B cell (primary cell): ENCODE measurements at regions of chr16 and their contacts with region 1.

Region 1: DNA sequence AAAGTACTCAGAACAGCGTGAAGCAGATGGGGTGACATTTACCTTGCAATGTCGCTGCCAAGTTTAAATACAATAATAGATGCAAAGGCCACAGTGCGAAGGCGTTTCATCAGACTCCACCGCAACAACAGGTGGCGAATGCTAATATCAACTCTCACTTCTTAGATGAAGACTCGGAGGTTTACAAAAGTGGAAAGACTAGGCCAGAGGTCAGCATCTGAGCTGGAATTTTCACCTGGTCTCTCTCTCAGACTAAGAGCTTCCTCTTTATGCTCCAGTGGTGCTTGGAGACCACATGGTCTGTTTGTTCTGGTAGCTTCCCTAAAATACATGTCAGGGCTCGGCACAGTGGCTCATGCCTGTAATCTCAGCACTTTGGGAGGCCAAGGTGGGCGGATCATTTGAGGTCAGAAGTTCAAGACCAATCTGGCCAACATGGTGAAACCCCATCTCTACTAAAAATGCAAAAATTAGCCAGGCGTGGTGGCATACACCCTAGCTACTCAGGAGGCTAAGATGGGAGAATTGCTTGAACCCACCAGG is 169.1 kb downstream of the XYLT1 start:
- DNase-seq: peak; percentile 95
- ATAC-seq: peak; percentile 88
- H3K4me3 ChIP-seq: peak overlapping the region in 1 of 5 experiments; percentile 9
- H3K4me3 Mint-ChIP-seq: peak overlapping the region; percentile 48
- H3K27ac ChIP-seq: peak overlapping the region; percentile 83 to 89
- H3K27ac Mint-ChIP-seq: peak overlapping the region; percentile 91
- H3K4me1 ChIP-seq: peaks cover 62 to 77% of the 10 kb centered on the region in 2 donors
- H3K4me1 Mint-ChIP-seq: peaks cover 71% of the 10 kb centered on the region
- H3K27me3 ChIP-seq: no peaks in the 10 kb centered on the region
- H3K27me3 Mint-ChIP-seq: no peaks in the 10 kb centered on the region
- CTCF ChIP-seq: no peak

Region 2: DNA sequence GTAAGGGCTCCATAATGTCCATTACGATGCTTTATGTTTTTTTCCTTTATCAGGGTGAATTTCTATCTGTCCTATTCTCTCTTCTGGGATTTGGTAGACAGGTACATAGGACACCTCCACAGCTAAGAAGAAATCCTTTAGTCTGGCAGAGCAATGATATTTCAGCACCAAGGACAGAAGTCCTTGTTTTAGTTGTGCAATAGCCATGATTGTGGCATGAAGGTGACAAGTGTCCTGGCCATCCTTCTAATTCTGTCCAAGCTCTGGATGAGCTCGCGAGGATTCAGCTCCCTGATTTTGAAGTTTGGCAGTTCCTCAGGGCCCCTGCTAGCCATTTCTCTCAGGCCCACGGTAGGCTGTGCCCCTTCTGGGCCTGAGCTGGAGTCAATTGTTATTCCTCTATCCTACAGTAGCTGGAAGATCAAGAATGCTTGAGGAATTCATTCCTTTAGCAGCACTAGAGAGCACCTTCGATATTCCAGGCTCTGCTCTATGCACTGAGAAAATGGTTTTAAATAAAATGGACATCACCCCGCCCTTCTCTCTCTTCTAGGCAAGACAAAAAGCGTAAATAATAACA is 151.7 kb before region 1 on chr16:
- CTCF ChIA-PET with region 1: no interaction called
- POLR2A ChIA-PET with region 1: no interaction called
- intact Hi-C with region 1: no loop called
- DNase-seq: no peak
- ATAC-seq: no peak
- H3K4me3 ChIP-seq: no peak overlapping the region
- H3K4me3 Mint-ChIP-seq: no peak overlapping the region
- H3K27ac ChIP-seq: no peak overlapping the region
- H3K27ac Mint-ChIP-seq: no peak overlapping the region
- H3K4me1 ChIP-seq: peaks cover 9 to 11% of the 10 kb centered on the region in 2 donors
- H3K4me1 Mint-ChIP-seq: peaks cover 7% of the 10 kb centered on the region
- H3K27me3 ChIP-seq: no peaks in the 10 kb centered on the region
- H3K27me3 Mint-ChIP-seq: no peaks in the 10 kb centered on the region
- CTCF ChIP-seq: no peak

Region 3: GRCh38 chr16:17160285-17160853 is 141.3 kb before region 1 on chr16:
- CTCF ChIA-PET with region 1: no interaction called
- POLR2A ChIA-PET with region 1: no interaction called
- intact Hi-C with region 1: no loop called
- DNase-seq: no peak
- ATAC-seq: no peak
- H3K4me3 ChIP-seq: no peak overlapping the region
- H3K4me3 Mint-ChIP-seq: no peak overlapping the region
- H3K27ac ChIP-seq: no peak overlapping the region
- H3K27ac Mint-ChIP-seq: no peak overlapping the region
- H3K4me1 ChIP-seq: peaks cover 23 to 27% of the 10 kb centered on the region in 2 donors
- H3K4me1 Mint-ChIP-seq: peaks cover 28% of the 10 kb centered on the region
- H3K27me3 ChIP-seq: no peaks in the 10 kb centered on the region
- H3K27me3 Mint-ChIP-seq: no peaks in the 10 kb centered on the region
- CTCF ChIP-seq: no peak

Region 4: DNA sequence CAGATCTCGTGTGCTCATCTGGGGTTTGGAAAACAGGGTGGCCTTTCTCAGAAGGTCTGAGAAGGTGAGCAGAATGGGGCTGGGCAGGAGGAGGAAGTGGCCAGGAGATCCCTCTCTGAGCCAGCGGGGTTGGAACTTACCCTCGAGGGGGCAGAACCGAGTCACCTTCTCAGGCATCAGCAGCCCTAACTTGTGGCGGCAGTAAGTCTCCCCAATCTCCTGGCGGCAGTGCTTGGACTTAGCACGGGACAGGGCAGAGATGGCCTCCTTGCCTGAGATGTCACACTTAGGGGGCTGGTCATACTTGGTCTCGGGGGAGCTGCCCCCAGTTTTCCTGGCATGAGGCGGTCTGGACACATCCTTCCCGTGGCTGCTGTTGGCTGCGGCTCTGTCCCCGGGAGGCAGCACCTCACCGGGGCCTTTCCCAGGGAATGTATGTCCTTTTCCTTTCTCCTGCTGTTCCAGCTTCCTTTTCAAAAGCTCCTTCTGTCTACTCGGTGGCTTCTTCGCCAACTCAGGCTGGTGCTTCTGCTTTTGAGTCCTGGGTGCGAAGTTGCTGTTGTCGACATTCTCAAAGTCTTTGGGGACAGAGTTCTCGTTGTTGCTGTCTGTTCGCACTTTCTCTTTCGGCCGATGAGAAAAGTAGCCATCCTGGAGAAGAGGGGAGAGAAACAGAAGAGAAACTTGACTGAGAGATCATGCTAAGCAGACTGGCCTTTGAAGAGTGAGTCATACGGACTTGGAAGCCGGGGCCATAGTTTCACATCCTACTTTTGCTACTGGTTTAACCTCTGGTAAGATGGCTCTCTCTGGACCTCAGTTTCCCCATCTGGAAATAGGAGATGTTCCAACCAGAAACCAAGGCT is 42.6 kb before region 1 on chr16:
- CTCF ChIA-PET with region 1: interaction called, 8 read pairs
- POLR2A ChIA-PET with region 1: no interaction called
- intact Hi-C with region 1: loop called (anchors 2 kb)
- DNase-seq: peak; percentile 58
- ATAC-seq: peak; percentile 76
- H3K4me3 ChIP-seq: peak overlapping the region in 4 of 5 experiments; percentile 16 to 51 (median 24)
- H3K4me3 Mint-ChIP-seq: peak overlapping the region; percentile 83
- H3K27ac ChIP-seq: peak overlapping the region; percentile 42 to 65
- H3K27ac Mint-ChIP-seq: peak overlapping the region; percentile 88
- H3K4me1 ChIP-seq: peaks cover 19 to 21% of the 10 kb centered on the region in 2 donors
- H3K4me1 Mint-ChIP-seq: peaks cover 40% of the 10 kb centered on the region
- H3K27me3 ChIP-seq: no peaks in the 10 kb centered on the region
- H3K27me3 Mint-ChIP-seq: no peaks in the 10 kb centered on the region
- CTCF ChIP-seq: no peak

Region 5: DNA sequence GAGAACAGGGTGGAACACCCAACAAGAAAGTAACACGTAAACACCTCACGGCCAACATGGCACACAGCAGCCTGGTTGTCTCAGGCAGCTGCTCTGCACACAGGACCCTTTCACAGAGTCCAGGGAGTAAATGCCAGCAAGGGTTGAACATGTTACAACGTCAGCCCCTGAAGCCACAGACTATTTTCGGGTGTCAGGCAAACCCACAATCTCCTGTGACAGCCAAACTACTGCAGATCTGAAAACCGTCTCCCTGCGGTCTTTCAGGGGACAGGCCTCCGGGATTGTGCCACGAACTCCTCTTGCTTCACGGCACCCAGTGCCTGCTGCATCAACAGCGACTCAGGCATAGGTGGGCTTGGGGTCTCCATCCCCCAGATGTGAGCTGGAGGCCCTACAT is 41.4 kb after region 1 on chr16:
- CTCF ChIA-PET with region 1: interaction called, 5 read pairs
- POLR2A ChIA-PET with region 1: interaction called, 11 read pairs
- intact Hi-C with region 1: loop called (anchors 1 kb)
- DNase-seq: peak; percentile 69
- ATAC-seq: peak; percentile 63
- H3K4me3 ChIP-seq: peak overlapping the region in 2 of 5 experiments; percentile 14 to 17
- H3K4me3 Mint-ChIP-seq: peak overlapping the region; percentile 66
- H3K27ac ChIP-seq: peak overlapping the region; percentile 62 to 72
- H3K27ac Mint-ChIP-seq: peak overlapping the region; percentile 87
- H3K4me1 ChIP-seq: peaks cover 73 to 80% of the 10 kb centered on the region in 2 donors
- H3K4me1 Mint-ChIP-seq: peaks cover 68% of the 10 kb centered on the region
- H3K27me3 ChIP-seq: no peaks in the 10 kb centered on the region
- H3K27me3 Mint-ChIP-seq: no peaks in the 10 kb centered on the region
- CTCF ChIP-seq: no peak

Region 6: GRCh38 chr16:17369421-17370222 is 68.0 kb after region 1 on chr16:
- CTCF ChIA-PET with region 1: interaction called, 48 read pairs
- POLR2A ChIA-PET with region 1: interaction called, 26 read pairs
- intact Hi-C with region 1: loop called (anchors 1 kb)
- DNase-seq: peak; percentile 88
- ATAC-seq: peak; percentile 87
- H3K4me3 ChIP-seq: peak overlapping the region; percentile 22 to 56 (median 33)
- H3K4me3 Mint-ChIP-seq: peak overlapping the region; percentile 88
- H3K27ac ChIP-seq: peak overlapping the region; percentile 91 to 93
- H3K27ac Mint-ChIP-seq: peak overlapping the region; percentile 96
- H3K4me1 ChIP-seq: peaks cover 82 to 86% of the 10 kb centered on the region in 2 donors
- H3K4me1 Mint-ChIP-seq: peaks cover 87% of the 10 kb centered on the region
- H3K27me3 ChIP-seq: no peaks in the 10 kb centered on the region
- H3K27me3 Mint-ChIP-seq: no peaks in the 10 kb centered on the region
- CTCF ChIP-seq: no peak

Region 7: DNA sequence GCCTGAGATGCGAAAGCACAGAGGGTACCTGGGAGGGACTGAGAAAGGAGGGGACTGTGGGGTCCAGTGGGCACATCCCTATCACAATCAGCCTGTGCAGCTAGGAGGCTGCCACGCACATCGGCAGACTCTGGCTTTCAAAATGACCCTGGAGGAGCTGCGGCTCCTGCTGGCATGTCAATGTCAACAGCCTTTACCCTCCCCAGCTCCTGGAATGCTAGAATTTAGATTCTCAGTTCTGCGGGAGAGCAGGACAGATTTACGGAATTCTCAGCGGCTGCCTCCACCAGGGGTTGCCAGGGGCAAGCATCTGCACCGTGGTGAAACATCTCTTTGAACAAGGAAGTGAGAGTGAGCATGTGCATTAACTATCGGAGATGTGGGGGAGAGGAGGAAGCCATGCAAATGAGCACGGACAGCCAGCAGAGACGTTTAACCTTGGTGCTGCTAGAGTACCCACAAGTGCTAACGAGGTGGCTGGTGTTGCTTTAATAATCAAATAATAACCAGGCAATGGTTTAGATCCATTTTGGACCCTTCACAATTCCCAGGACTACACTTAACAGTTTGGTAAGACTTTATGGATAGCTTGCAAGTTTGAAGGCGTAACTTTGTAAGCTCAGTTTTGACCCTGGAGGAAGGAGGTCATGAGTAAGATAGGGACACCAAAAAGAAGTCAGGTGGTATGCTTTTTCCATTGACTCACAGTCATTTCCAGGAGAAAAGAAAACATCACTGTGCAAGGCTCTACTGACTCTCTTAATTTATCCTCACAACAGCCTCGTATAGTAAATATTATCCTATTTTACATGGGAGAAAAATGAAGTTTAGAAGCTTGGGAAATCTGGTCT is 115.0 kb after region 1 on chr16:
- CTCF ChIA-PET with region 1: interaction called, 13 read pairs
- POLR2A ChIA-PET with region 1: interaction called, 7 read pairs
- intact Hi-C with region 1: loop called (anchors 1 kb)
- DNase-seq: peak; percentile 90
- ATAC-seq: peak; percentile 91
- H3K4me3 ChIP-seq: peak overlapping the region; percentile 2 to 61 (median 40)
- H3K4me3 Mint-ChIP-seq: peak overlapping the region; percentile 85
- H3K27ac ChIP-seq: peak overlapping the region; percentile 76 to 81
- H3K27ac Mint-ChIP-seq: peak overlapping the region; percentile 90
- H3K4me1 ChIP-seq: peaks cover 61 to 68% of the 10 kb centered on the region in 2 donors
- H3K4me1 Mint-ChIP-seq: peaks cover 69% of the 10 kb centered on the region
- H3K27me3 ChIP-seq: no peaks in the 10 kb centered on the region
- H3K27me3 Mint-ChIP-seq: no peaks in the 10 kb centered on the region
- CTCF ChIP-seq: peak; percentile 68

Region 8: GRCh38 chr16:17467923-17468540 is 166.4 kb after region 1 on chr16:
- CTCF ChIA-PET with region 1: interaction called, 33 read pairs
- POLR2A ChIA-PET with region 1: interaction called, 6 read pairs
- intact Hi-C with region 1: loop called (anchors 2 kb)
- DNase-seq: peak; percentile 58
- ATAC-seq: peak; percentile 28
- H3K4me3 ChIP-seq: peak overlapping the region in 1 of 5 experiments; percentile 17
- H3K4me3 Mint-ChIP-seq: peak overlapping the region; percentile 93
- H3K27ac ChIP-seq: no peak overlapping the region
- H3K27ac Mint-ChIP-seq: no peak overlapping the region
- H3K4me1 ChIP-seq: peaks cover 42 to 46% of the 10 kb centered on the region in 2 donors
- H3K4me1 Mint-ChIP-seq: peaks cover 56% of the 10 kb centered on the region
- H3K27me3 ChIP-seq: no peaks in the 10 kb centered on the region
- H3K27me3 Mint-ChIP-seq: no peaks in the 10 kb centered on the region
- CTCF ChIP-seq: peak; percentile 12